Astrocyte of the cerebellum (primary cell): ENCODE measurements at regions of chr17 and their contacts with region 1.

Region 1: DNA sequence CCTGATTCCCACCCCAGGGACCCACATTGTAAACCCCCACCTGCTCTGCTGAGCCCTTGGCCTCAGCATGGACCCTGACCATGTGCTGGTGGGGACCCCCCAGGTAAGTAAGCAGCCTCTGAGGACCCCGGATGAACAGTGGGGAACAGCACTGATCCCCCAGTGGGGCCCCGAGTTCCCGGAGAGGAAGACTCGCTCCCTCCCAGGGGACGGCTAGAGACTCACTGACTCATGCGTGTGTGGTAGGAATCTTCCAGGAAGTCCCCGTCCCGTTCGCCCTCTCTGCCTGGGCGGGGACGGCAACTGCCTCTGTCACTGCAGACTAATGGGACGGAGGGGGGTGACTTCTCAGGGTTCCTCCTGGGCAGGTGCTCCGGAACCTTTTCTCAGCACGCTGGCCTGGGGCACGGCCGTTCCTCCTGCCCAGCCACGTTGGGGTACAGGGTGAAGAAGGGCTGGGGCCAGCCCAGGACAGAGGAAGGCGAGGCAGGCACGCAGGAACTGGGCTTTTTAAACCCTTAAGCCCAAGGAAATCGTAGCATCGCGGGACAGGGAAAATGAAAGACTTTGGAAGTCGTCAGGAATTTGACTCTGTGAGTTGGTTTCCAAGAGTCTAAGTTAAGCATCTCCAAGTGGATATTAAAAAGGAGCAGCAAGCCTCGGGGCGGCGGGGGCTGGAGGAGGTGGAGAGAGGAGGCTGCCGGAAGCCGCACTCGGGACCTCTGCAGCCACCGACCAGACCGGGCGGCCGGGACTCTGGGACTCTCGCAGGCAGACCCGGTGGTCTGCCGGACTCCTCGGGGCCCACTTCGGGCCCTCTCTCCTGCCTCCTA is 178.7 kb downstream of the SEC14L1 start:
- DNase-seq: no peak
- H3K4me3 ChIP-seq: peak overlapping the region; percentile 16
- CTCF ChIP-seq: no peak

Region 2: DNA sequence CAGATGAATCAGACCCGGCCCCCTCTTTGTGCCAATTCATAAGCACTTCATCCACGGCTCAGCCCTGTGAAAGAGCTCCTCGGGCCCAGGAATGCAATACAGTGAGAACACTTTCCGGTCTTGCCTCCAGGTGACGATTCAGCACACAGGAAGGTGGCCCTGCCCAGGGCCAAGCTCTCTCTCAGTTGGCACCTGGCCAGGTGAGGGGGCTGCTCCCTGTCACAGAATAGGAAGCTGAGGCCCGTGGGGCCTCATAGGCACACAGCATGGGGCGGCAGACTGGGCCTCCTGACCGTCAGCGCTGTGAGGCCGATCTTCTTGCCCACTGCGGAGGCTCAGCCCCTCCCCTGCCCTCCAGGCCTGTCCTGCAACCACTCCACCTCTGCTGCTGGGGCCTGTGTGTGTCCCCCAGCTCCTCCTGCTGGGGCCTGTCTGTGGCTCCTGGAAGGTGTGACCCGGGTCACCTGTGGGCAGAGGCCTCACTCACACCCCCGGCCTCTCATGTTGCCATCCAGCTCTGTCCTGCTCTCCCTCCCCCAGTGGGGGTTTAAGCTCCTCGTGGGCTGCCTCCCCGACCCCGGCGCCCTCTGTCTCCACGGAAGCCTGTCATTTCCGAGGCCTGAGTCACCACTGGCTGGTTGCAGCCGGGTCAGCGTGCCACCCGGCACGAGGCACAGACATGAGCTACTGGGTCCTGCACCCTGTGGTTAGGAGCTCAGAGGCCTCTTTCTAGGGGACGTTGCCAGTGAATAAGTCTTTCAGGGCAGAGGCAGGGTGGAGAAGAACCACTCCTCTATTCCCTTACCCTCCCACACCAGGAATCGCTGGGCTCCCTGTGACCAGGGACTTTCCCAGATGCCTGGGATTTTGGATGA is 64.2 kb before region 1 on chr17:
- in situ Hi-C with region 1: no loop called
- DNase-seq: no peak
- H3K4me3 ChIP-seq: no peak overlapping the region
- CTCF ChIP-seq: no peak

Region 3: GRCh38 chr17:77444984-77445759 is 125.7 kb after region 1 on chr17:
- in situ Hi-C with region 1: loop called (anchors 10 kb)
- DNase-seq: no peak
- H3K4me3 ChIP-seq: no peak overlapping the region
- CTCF ChIP-seq: no peak